Endothelial cell of umbilical vein (primary cell): ENCODE measurements at regions of chr11 and their contacts with region 1.

Region 1: DNA sequence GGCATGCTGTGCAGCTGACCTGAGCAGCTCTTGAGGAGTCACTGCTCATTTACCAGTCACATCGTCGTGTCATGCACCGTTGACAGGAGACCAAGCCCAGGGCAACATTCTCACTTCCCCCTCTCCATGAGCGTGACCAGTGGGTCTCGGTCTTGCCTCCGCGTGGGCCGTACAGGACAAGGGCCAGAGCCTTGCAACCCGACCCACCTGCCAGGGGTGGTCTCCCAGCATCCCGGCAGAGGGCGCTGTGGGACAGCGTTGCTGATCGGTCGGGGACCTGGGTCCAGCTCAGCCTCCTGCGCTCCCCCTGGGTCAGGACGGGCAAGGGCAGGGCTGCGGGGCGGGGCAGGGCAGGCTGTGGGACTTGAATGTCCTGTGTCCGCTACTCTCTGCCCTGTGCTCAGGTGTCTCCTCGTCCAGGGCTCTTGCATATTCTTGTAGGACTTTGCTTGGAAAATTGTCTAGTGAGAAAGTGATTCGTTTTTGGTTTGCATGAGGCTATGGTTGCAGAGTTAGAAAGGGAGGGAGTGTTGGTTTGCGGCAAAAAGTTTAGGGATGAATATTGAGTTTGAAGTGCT is 16.2 kb downstream of the EIF4G2 start:
- DNase-seq: peak; percentile 69
- H3K4me3 ChIP-seq: no peak overlapping the region
- H3K27ac ChIP-seq: no peak overlapping the region
- H3K4me1 ChIP-seq: no peaks in the 10 kb centered on the region
- H3K27me3 ChIP-seq: no peaks in the 10 kb centered on the region
- CTCF ChIP-seq: peak; percentile 97 to 98
- POLR2A ChIP-seq: no peak

Region 2: GRCh38 chr11:10770626-10771254 is 21.7 kb before region 1 on chr11:
- CTCF ChIA-PET with region 1: interaction called, 25 read pairs
- POLR2A ChIA-PET with region 1: no interaction called
- dilution Hi-C with region 1: no loop called
- intact Hi-C with region 1: no loop called
- DNase-seq: peak; percentile 71
- H3K4me3 ChIP-seq: no peak overlapping the region
- H3K27ac ChIP-seq: no peak overlapping the region
- H3K4me1 ChIP-seq: no peaks in the 10 kb centered on the region
- H3K27me3 ChIP-seq: no peaks in the 10 kb centered on the region
- CTCF ChIP-seq: peak; percentile 69 to 75
- POLR2A ChIP-seq: no peak

Region 3: DNA sequence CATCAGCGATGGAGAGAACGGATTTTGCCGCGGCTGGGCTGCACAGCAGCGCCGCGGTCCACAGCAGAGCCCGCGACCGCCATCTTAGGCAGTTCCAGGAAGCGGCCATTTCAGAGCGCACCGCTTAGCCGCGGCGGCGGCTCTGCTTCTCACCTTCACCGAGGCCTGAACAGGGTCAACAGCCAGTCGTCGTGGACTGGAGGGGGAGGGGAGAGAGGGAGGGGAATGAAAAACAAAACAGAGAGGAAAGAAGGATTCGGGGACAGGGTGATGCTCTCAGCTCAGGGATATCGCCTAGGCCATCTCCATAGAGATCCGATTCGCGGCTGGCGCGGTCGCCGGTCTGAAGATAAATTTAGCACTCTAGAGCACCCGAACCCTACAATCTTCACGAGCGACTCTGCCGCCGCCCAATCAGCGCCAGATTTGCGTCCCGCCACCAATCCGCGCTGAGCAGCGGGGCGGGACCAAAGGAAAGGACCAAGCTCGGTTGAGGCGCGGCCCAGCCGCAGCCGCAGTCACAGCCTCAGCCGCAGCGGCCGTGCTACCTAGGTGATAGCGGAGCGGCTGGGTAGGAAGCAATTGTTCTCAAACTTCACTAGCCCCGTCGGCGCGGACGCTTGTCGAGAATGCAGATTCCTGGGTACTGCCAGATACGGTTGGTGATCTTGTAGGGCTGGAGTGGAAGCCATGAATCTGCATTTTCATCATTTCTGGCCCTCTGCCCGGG is 65.4 kb after region 1 on chr11 and contains the start of gene ZBED5:
- CTCF ChIA-PET with region 1: interaction called, 11 read pairs
- POLR2A ChIA-PET with region 1: interaction called, 3 read pairs
- dilution Hi-C with region 1: no loop called
- intact Hi-C with region 1: no loop called
- DNase-seq: peak; percentile 99
- H3K4me3 ChIP-seq: peak within 1 kb of the TSS; percentile 63 to 100 (median 94)
- H3K27ac ChIP-seq: peak within 1 kb of the TSS; percentile 80
- H3K4me1 ChIP-seq: peaks cover 8% of the 10 kb centered on the region
- H3K27me3 ChIP-seq: no peaks in the 10 kb centered on the region
- CTCF ChIP-seq: peak in 1 of 2 donors; percentile 4
- POLR2A ChIP-seq: peak; percentile 96
- total RNA-seq, gene ZBED5: 35.7 and 41.2 TPM in 2 replicates

Region 4: GRCh38 chr11:10868375-10868774 is 75.9 kb after region 1 on chr11:
- CTCF ChIA-PET with region 1: no interaction called
- POLR2A ChIA-PET with region 1: no interaction called
- dilution Hi-C with region 1: no loop called
- intact Hi-C with region 1: no loop called
- DNase-seq: no peak
- H3K4me3 ChIP-seq: no peak overlapping the region
- H3K27ac ChIP-seq: no peak overlapping the region
- H3K4me1 ChIP-seq: no peaks in the 10 kb centered on the region
- H3K27me3 ChIP-seq: no peaks in the 10 kb centered on the region
- CTCF ChIP-seq: no peak
- POLR2A ChIP-seq: no peak

Region 5: GRCh38 chr11:10911907-10912306 is 119.4 kb after region 1 on chr11:
- CTCF ChIA-PET with region 1: interaction called, 23 read pairs
- POLR2A ChIA-PET with region 1: no interaction called
- dilution Hi-C with region 1: no loop called
- intact Hi-C with region 1: no loop called
- DNase-seq: peak; percentile 34
- H3K4me3 ChIP-seq: no peak overlapping the region
- H3K27ac ChIP-seq: no peak overlapping the region
- H3K4me1 ChIP-seq: peaks cover 17% of the 10 kb centered on the region
- H3K27me3 ChIP-seq: no peaks in the 10 kb centered on the region
- CTCF ChIP-seq: no peak
- POLR2A ChIP-seq: no peak

Region 6: DNA sequence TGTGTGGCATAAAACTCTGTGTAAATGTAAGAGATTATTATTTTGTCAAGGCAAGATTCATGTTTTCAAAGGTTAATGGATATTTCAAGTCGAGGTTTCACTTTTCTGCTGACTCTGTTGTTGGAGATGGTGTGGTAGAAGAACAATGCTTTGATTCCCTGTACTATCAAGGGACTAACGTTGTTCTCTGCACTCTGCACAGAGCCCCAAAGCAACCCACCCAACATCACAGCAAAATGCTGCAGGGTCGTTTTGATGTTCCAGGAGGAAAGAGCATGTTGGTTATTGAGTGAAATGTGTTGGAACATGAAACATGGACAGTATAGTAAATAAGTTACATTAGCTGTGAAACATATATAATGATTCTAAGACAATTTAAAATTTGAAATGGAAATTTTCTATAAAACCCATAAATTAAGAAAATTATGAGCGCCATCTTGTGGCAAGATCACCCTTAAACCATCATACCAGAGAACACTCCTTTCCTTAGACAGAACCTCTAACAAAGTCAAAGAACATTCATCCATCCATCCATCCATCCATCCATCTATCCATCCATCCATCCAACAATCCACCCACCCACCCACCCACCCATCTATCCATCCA is 229.7 kb after region 1 on chr11:
- CTCF ChIA-PET with region 1: interaction called, 83 read pairs
- POLR2A ChIA-PET with region 1: interaction called, 4 read pairs
- dilution Hi-C with region 1: no loop called
- intact Hi-C with region 1: loop called (anchors 1 kb)
- DNase-seq: peak; percentile 29
- H3K4me3 ChIP-seq: no peak overlapping the region
- H3K27ac ChIP-seq: no peak overlapping the region
- H3K4me1 ChIP-seq: peaks cover 19% of the 10 kb centered on the region
- H3K27me3 ChIP-seq: peaks cover 0 to 9% of the 10 kb centered on the region in 2 experiments
- CTCF ChIP-seq: peak; percentile 16 to 26
- POLR2A ChIP-seq: no peak

Region 7: GRCh38 chr11:11787305-11788062 is 995.0 kb after region 1 on chr11:
- CTCF ChIA-PET with region 1: interaction called, 33 read pairs
- POLR2A ChIA-PET with region 1: no interaction called
- dilution Hi-C with region 1: no loop called
- intact Hi-C with region 1: loop called (anchors 1 kb)
- DNase-seq: peak; percentile 66
- H3K4me3 ChIP-seq: no peak overlapping the region
- H3K27ac ChIP-seq: no peak overlapping the region
- H3K4me1 ChIP-seq: no peaks in the 10 kb centered on the region
- H3K27me3 ChIP-seq: peaks cover 0 to 5% of the 10 kb centered on the region in 2 experiments
- CTCF ChIP-seq: peak; percentile 69 to 73
- POLR2A ChIP-seq: no peak